ENCODE measurements at regions of chr17 and their contacts with region 1.

Region 1: DNA sequence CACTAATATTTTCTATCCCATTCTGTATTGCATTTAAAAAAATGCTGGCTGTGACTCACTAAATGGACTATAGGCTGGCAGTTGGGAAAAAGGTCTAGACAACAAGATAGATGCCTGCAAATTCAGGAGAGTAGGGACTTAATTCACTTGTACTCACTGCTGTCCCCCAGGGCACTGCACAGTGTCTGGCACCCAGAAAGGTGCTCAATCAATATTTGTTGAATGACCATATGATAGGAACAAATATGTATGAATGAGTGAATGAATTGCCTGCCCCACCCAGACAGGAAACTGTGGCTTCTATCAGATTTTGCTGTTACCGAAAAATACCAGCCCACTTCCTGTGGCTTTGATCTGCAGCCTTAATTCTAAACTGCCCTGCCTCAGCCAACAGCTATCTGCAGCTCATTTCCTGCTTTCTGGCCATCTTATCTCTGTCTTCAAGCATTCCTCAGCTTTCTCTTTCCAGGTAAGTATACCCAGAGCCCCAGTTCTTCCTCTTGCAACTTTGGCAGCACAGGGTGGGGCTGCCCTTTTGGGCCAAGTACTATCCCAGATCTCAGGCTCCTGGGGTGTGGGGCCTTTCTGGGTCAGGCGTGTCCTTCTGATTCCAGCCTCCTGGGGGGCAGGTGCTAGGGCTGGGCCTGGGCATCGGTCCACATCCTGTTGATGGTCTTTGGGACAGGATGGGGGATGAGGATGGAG is 15.3 kb upstream of the TNS4 start:
- DNase-seq: peak; percentile 65 to 94
- H3K4me3 ChIP-seq: no peak overlapping the region
- H3K27ac ChIP-seq: peak overlapping the region; percentile 69
- H3K4me1 ChIP-seq: peaks cover 99% of the 10 kb centered on the region
- H3K27me3 ChIP-seq: no peaks in the 10 kb centered on the region
- CTCF ChIP-seq: no peak

Region 2: DNA sequence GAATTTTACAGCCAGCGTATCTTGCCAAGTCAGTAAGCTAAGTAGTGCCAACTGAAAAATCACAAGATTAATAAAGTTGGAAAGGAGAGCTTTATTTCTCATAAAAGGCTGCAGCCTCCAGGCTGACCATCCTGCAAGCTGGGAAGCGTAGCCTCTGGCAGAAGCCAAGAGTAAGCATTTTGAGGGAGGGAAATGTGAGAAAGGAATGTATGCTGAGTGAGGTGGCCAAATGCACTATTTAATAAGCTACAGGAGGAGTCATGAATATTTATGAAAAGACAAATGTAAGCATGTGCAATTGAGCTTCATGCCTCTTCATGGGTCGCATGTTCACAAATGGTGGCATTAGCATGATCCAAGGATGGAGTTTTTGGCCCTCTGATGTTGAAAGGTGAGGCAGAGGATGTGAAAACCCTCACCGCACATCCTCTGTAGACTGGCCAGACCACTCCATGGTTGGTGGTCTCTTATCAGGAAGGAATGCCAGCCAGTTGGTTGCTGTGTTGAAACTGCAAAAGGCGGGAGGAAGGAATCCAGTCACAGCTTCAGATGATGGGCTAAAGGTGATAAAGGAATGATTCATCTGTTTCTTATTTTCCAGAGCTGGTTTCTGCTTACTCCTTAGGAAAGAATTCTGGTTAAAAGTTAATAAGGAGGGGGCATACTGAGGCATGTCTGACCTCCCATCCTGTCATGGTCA is 843.7 kb after region 1 on chr17:
- CTCF ChIA-PET with region 1: no interaction called
- POLR2A ChIA-PET with region 1: no interaction called
- intact Hi-C with region 1: no loop called
- DNase-seq: peak; percentile 44 to 94
- H3K4me3 ChIP-seq: no peak overlapping the region
- H3K27ac ChIP-seq: peak overlapping the region; percentile 84
- H3K4me1 ChIP-seq: peaks cover 43% of the 10 kb centered on the region
- H3K27me3 ChIP-seq: no peaks in the 10 kb centered on the region
- CTCF ChIP-seq: no peak

Region 3: GRCh38 chr17:41505809-41506731 is 989.3 kb after region 1 on chr17:
- CTCF ChIA-PET with region 1: no interaction called
- POLR2A ChIA-PET with region 1: interaction called, 11 read pairs
- intact Hi-C with region 1: no loop called
- DNase-seq: peak in 1 of 2 experiments; percentile 59
- H3K4me3 ChIP-seq: peak overlapping the region; percentile 58; the same call in 1 of the 2 replicates
- H3K27ac ChIP-seq: peak overlapping the region; percentile 94
- H3K4me1 ChIP-seq: peaks cover 84% of the 10 kb centered on the region
- H3K27me3 ChIP-seq: no peaks in the 10 kb centered on the region
- CTCF ChIP-seq: no peak

Measured in PC-9 (cell line).